IMR-90 (cell line): ENCODE measurements at regions of chr11 and their contacts with region 1.

Region 1: GRCh38 chr11:18203723-18204122 is 31.1 kb downstream of the MRGPRX4 start:
- DNase-seq: peak; percentile 14
- ATAC-seq: peak; percentile 69
- H3K4me3 ChIP-seq: no peak overlapping the region
- H3K27ac ChIP-seq: no peak overlapping the region
- H3K4me1 ChIP-seq: no peaks in the 10 kb centered on the region
- H3K27me3 ChIP-seq: peaks cover 3% of the 10 kb centered on the region
- CTCF ChIP-seq: peak; percentile 45
- POLR2A ChIP-seq: no peak
- RAD21 ChIP-seq: peak; percentile 42; the same call in 1 of the 2 replicates

Region 2: GRCh38 chr11:18115360-18116127 is 88.2 kb before region 1 on chr11:
- CTCF ChIA-PET with region 1: no interaction called
- POLR2A ChIA-PET with region 1: no interaction called
- dilution Hi-C with region 1: no loop called
- in situ Hi-C with region 1: no loop called
- intact Hi-C with region 1: loop called (anchors 1 kb)
- DNase-seq: peak; percentile 55
- ATAC-seq: peak; percentile 97
- H3K4me3 ChIP-seq: no peak overlapping the region
- H3K27ac ChIP-seq: no peak overlapping the region
- H3K4me1 ChIP-seq: no peaks in the 10 kb centered on the region
- H3K27me3 ChIP-seq: peaks cover 11% of the 10 kb centered on the region
- CTCF ChIP-seq: peak; percentile 82
- POLR2A ChIP-seq: no peak
- RAD21 ChIP-seq: peak; percentile 80

Region 3: GRCh38 chr11:18132341-18132740 is 71.4 kb before region 1 on chr11 and contains the start of gene MRGPRX3:
- CTCF ChIA-PET with region 1: no interaction called
- POLR2A ChIA-PET with region 1: no interaction called
- dilution Hi-C with region 1: no loop called
- in situ Hi-C with region 1: no loop called
- intact Hi-C with region 1: no loop called
- DNase-seq: no peak
- ATAC-seq: no peak
- H3K4me3 ChIP-seq: no peak within 1 kb of the TSS
- H3K27ac ChIP-seq: no peak within 1 kb of the TSS
- H3K4me1 ChIP-seq: no peaks in the 10 kb centered on the region
- H3K27me3 ChIP-seq: no peaks in the 10 kb centered on the region; the same call in 1 of the 2 replicates
- CTCF ChIP-seq: no peak
- POLR2A ChIP-seq: no peak
- RAD21 ChIP-seq: no peak
- total RNA-seq, gene MRGPRX3: not detected in 2 replicates